ENCODE measurements at regions of chr4 and their contacts with region 1.

Region 1: DNA sequence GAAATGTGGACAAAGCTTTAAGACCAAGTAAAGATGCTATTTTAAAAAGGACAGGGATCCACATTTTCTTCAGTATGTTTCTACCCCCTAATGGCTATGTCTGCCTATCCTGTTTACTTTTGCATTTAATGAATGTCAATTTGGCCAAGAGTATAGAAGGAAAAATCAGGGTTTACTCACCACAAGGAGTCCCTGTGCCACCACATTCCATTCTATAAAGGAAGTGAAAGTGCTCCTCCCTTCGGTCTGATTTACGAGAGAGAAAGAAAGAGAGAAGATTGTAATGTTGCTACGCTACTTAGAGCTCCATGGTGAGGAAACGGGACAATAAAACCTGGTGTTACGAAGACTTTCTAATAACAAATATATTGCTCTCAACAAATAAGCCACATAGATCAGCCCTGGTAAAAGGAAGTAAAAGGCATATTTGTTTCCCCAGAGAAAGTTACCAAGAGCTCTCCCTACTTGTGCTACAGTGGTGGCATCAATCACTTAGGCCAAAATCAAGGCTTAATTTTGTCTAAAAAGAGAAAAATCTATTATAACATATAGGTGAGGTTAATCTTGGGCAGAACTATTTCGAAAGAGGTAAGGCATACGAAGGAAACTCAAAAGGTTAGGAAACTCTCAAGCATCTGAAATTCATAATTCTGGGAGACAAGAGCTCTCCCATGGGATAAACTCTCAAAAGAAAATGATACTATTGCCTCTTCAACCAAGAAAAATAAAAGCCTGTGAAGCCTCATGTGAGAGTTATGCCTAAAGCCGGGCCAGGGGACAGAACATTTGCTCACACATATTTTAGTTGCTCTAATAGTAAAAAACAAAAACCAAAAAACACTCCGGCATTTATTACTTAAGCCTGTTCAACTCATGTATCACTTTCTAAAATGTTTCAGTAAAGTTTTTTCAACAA is 29.5 kb downstream of the TAPT1 start:
- DNase-seq: no peak

Region 2: DNA sequence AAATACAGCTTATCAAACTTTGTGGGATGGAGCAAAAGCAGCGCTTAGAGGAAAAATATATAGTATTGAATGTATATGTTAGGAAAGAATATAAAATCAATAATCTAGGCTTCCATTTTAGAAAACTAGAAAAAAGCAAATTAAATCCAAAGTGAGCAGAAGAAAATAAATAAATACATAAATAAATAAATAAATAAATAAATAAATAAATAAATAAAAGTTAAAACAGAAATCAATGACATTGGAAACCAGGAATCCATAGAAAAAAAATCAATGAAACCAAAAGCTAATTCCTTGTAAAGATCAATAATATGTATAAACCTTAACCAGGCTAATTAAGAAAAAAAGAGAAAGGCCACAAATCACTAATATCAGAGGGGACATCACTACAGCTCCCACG is 910.7 kb before region 1 on chr4:
- intact Hi-C with region 1: no loop called
- DNase-seq: no peak

Region 3: DNA sequence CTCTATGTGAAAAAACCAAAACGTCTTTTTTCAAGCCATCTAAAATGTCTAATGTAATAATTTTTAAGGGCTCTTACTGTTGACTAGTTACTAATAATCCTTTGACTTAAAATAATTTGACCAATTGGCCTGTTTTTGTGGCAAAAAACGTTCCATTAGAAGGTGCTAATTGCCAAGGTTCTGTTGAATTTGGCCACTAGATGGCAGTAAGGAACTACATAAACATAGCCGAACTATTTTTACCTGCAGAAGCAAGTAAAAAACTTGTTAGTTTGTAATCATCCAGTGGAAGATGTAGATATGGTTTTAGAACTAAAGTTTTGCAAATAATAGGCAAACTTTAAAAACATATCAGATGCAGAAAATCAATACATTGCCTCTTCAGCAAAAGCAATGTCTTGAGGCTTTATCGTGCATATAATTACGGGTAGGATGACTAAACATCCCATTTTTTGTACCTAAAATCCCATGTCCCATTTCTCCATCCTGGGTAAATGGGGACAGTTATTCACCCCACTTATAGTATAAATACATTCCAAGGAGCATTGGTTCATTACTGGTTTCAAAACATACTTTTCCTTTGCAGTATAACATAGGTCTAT is 170.5 kb before region 1 on chr4:
- intact Hi-C with region 1: loop called (anchors 5 to 10 kb)
- DNase-seq: no peak

Region 4: GRCh38 chr4:16256343-16256742 is 59.6 kb after region 1 on chr4:
- intact Hi-C with region 1: loop called (anchors 2 to 10 kb)
- DNase-seq: no peak

Region 5: GRCh38 chr4:16264798-16265197 is 68.1 kb after region 1 on chr4:
- intact Hi-C with region 1: loop called in 1 of 2 experiments (anchors 10 kb)
- DNase-seq: no peak

Region 6: GRCh38 chr4:18138076-18138665 is 1941.4 kb after region 1 on chr4:
- intact Hi-C with region 1: no loop called
- DNase-seq: no peak